Psoas muscle (tissue), 8 donors: ENCODE measurements at regions of chr11 and their contacts with region 1.

Region 1: GRCh38 chr11:78424334-78425270 is 7.0 kb upstream of the GAB2 start:
- DNase-seq: no peak
- ATAC-seq: peak in 1 of 4 donors; percentile 20
- H3K4me3 ChIP-seq: no peak overlapping the region
- H3K27ac ChIP-seq: no peak overlapping the region
- H3K4me1 ChIP-seq: peaks cover 4% of the 10 kb centered on the region
- H3K27me3 ChIP-seq: no peaks in the 10 kb centered on the region
- CTCF ChIP-seq: no peak

Region 2: GRCh38 chr11:77879218-77879617 is 545.4 kb before region 1 on chr11:
- intact Hi-C with region 1: no loop called
- DNase-seq: peak; percentile 79 to 89
- ATAC-seq: peak in 3 of 4 donors; percentile 34 to 69 (median 35)
- H3K4me3 ChIP-seq: no peak overlapping the region
- H3K27ac ChIP-seq: peak overlapping the region; percentile 71
- H3K4me1 ChIP-seq: peaks cover 5% of the 10 kb centered on the region
- H3K27me3 ChIP-seq: no peaks in the 10 kb centered on the region
- CTCF ChIP-seq: no peak

Region 3: DNA sequence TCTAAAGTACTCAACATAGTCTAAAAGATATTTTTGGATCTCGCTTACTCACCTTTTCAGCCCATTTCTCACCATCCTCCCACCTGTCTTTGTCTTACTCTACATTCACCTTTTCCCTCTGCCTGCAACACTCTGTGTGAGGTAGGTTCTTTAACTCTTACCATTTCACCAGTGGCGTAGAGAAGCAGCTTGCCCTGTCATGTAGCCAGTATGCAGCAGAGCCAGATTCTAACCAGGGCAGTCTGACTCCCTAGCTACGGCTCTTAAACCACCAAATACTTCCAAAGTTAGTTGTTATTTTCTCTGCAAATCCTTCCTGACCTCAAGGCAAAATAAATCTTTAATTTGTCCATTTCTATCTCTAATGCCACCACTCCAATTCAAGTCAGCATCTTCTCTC is 292.6 kb before region 1 on chr11:
- intact Hi-C with region 1: no loop called
- DNase-seq: no peak
- ATAC-seq: no peak
- H3K4me3 ChIP-seq: no peak overlapping the region
- H3K27ac ChIP-seq: no peak overlapping the region
- H3K4me1 ChIP-seq: no peaks in the 10 kb centered on the region
- H3K27me3 ChIP-seq: no peaks in the 10 kb centered on the region
- CTCF ChIP-seq: no peak

Region 4: DNA sequence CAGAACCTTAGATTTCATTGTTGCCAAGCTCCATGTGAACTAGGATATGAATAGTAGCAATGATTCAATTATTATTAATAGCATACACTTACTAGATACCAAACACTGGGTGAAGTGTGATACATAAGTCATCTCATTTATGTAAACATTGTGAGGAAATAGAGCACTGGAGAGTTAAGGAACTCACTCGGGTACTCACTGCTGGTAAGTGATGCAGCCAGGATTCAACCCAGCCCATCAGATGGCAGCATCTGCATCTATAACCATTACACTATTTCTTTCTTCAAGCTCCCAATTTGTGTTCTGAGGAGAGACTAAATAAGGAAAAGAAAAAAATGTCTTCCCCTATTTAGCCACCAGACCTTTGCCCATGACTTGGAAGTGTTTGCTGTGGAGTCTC is 275.0 kb before region 1 on chr11:
- intact Hi-C with region 1: loop called (anchors 5 to 10 kb)
- DNase-seq: no peak
- ATAC-seq: peak; percentile 68 to 98 (median 88)
- H3K4me3 ChIP-seq: no peak overlapping the region
- H3K27ac ChIP-seq: no peak overlapping the region
- H3K4me1 ChIP-seq: peaks cover 5% of the 10 kb centered on the region
- H3K27me3 ChIP-seq: no peaks in the 10 kb centered on the region
- CTCF ChIP-seq: peak; percentile 31

Region 5: GRCh38 chr11:78645226-78646202 is 220.9 kb after region 1 on chr11:
- intact Hi-C with region 1: no loop called
- DNase-seq: peak; percentile 49 to 71
- ATAC-seq: peak; percentile 73 to 83 (median 82)
- H3K4me3 ChIP-seq: no peak overlapping the region
- H3K27ac ChIP-seq: no peak overlapping the region
- H3K4me1 ChIP-seq: no peaks in the 10 kb centered on the region
- H3K27me3 ChIP-seq: no peaks in the 10 kb centered on the region
- CTCF ChIP-seq: peak; percentile 97